ENCODE measurements at regions of chr6 and their contacts with region 1.

Region 1: DNA sequence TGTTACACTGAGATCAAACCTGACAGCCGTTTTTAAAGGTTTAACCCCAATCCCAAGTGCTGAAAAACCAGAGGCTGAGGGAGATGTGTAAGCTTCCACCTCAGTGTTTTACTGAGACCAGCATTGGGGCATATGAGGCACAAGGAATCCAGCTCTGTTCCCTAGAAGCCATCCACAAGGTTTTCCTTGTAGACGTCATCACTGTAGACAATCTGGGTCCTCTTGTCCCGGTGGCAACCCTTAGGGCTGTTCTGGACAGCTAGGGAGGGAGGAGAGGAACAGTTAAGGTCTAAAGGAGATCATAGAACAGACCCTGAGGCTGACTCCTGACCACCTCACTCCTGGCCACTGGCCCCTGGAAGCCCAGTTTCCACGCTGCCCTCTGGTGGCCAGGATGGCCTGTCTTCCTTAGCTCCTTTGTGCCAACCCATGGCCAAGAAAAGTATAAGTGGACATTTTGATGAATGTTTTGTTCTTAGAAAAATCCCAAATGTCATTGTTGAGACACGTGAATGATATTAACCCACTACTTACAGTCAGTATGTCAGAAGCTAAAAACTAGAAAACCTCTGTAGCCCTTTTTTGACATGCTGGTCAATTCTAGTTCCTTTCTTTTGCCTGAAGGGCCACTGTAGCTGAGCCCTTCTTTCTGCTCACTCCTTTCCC is 6.4 kb downstream of the CFB start:
- DNase-seq: no peak
- H3K4me3 ChIP-seq: no peak overlapping the region
- CTCF ChIP-seq: peak; percentile 86

Region 2: DNA sequence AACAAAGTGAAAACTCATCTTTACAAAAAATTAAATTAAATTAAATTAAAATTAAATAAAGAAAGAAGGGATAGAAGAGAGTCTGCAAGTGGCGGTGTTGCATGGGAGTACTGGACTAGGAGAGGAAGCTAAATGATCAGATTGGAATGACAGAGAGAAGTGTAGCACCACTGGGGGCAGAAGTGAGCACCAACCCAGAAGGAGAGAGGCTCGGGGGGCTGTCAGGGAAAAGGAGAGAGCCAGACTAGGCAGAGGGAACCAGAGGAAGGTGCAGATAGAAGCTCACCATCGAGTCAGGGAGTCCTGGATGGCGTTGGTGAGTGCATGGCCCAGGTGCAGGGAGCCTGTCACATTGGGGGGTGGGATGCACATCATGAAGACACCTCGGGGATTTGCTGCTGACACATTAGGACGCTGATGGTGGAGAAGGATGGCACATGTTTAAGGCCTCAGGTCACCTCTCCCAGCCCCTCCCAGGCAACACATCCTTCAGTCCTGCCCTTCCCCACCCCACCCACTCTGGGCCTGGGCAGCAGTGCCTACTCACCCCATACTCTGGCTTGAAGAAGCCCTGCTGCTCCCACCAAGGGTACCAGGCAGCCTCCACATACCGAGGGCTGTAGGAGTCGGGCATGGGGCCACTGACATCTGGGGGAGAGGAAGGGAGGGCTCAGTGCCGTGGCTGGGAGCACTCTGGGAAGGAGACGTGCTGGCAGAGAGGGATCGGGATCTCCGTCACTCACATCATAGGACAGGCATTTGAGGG is 160.8 kb before region 1 on chr6:
- CTCF ChIA-PET with region 1: no interaction called
- POLR2A ChIA-PET with region 1: no interaction called
- DNase-seq: no peak
- H3K4me3 ChIP-seq: no peak overlapping the region
- CTCF ChIP-seq: peak; percentile 73

Region 3: DNA sequence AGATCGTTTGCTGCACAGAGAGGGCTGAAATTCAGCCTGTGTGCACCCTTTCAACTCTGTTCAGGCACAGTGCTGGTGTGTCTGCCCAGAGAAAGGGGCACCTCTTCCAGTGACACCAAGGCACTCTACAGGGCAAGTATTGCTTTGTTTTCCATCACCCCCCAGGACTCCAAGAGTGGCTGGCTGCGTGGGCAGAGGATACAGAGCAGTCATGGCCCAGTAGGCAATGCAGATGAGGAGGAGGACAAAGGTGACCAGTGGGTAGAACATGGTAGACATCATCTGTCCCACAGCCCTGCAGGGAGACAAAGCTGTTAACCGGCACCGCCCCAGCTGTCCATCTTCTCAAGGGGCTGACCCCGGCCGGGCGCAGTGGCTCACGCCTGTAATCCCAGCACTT is 82.9 kb before region 1 on chr6:
- CTCF ChIA-PET with region 1: interaction called, 10 read pairs
- POLR2A ChIA-PET with region 1: no interaction called
- DNase-seq: no peak
- H3K4me3 ChIP-seq: no peak overlapping the region
- CTCF ChIP-seq: no peak

Region 4: GRCh38 chr6:31888276-31889258 is 63.7 kb before region 1 on chr6:
- CTCF ChIA-PET with region 1: interaction called, 26 read pairs
- POLR2A ChIA-PET with region 1: no interaction called
- DNase-seq: no peak
- H3K4me3 ChIP-seq: no peak overlapping the region
- CTCF ChIP-seq: peak; percentile 83

Region 5: GRCh38 chr6:31908791-31909190 is 43.5 kb before region 1 on chr6:
- CTCF ChIA-PET with region 1: interaction called, 35 read pairs
- POLR2A ChIA-PET with region 1: interaction called, 3 read pairs
- DNase-seq: no peak
- H3K4me3 ChIP-seq: no peak overlapping the region
- CTCF ChIP-seq: no peak

Region 6: GRCh38 chr6:31940256-31940664 is 12.0 kb before region 1 on chr6:
- CTCF ChIA-PET with region 1: interaction called, 94 read pairs
- POLR2A ChIA-PET with region 1: interaction called, 4 read pairs
- DNase-seq: no peak
- H3K4me3 ChIP-seq: no peak overlapping the region
- CTCF ChIP-seq: no peak

Region 7: GRCh38 chr6:31971993-31972708 is 19.9 kb after region 1 on chr6 and contains the start of gene DXO:
- CTCF ChIA-PET with region 1: interaction called, 15 read pairs
- POLR2A ChIA-PET with region 1: interaction called, 5 read pairs
- DNase-seq: peak; percentile 91
- H3K4me3 ChIP-seq: peak within 1 kb of the TSS; percentile 98
- CTCF ChIP-seq: no peak